ENCODE measurements at regions of chr10 and their contacts with region 1.

Region 1: GRCh38 chr10:110893559-110894179 is 21.9 kb downstream of the PDCD4 start:
- H3K4me3 ChIP-seq: no peak overlapping the region
- H3K27ac ChIP-seq: no peak overlapping the region
- H3K4me1 ChIP-seq: no peaks in the 10 kb centered on the region
- CTCF ChIP-seq: no peak

Region 2: DNA sequence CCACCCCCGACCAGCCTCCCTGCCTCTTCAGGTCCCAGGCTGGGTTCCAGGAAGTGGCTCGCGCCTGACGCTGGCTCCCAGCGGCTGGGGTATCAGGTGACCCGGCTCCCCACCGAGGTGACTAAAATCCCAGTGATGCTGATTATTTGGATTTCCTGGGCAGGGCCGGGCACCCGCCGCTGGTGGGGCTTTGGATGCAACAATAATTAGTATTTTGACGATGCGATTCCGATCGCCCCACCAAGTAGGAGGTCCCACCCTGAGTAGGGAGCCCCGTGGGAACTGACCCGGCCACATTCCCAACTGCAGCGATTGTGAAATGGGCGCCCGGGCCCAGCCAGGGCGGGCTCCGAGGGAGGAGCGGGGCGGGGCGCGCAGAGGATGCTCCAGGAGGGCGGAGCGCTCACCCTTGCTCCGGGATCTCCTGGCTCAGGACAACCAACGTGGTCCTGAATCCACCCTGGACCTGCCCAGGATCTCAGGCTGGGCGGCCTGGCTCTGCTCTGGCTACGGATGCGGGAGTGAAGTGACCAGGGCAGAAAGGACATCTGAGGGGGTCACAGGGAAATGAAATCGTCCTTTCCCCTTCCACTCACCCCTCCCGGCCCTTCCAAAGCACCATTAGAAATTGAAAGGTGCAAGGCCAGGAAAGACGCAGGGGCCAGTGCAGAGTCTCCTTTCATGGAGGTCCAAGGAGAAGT is 363.4 kb before region 1 on chr10:
- CTCF ChIA-PET with region 1: no interaction called
- POLR2A ChIA-PET with region 1: no interaction called
- H3K4me3 ChIP-seq: peak overlapping the region; percentile 39
- H3K27ac ChIP-seq: peak overlapping the region; percentile 59; the same call in 1 of the 2 replicates
- H3K4me1 ChIP-seq: peaks cover 11% of the 10 kb centered on the region
- CTCF ChIP-seq: no peak

Region 3: DNA sequence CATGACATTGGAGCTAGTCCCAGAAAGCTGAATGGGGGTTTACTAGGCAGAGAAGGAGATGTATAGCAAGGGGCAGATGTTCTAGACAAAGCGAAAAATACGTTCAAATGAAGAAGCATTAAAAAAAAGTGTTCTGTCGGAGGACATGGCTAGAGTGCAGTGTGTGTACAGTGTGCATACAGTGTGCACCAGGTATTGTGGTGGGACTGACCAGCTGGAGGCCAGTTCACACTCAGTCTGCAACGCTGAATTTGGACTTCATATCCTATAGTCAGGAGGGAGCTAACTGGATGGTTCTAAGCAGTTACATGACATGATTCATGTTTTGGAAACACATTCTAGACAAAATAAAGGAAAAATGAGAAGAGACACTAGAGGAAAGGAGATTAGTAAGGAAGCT is 16.5 kb after region 1 on chr10:
- CTCF ChIA-PET with region 1: interaction called, 10 read pairs
- POLR2A ChIA-PET with region 1: no interaction called
- H3K4me3 ChIP-seq: no peak overlapping the region
- H3K27ac ChIP-seq: no peak overlapping the region
- H3K4me1 ChIP-seq: no peaks in the 10 kb centered on the region; the same call in 1 of the 2 replicates
- CTCF ChIP-seq: no peak

Region 4: GRCh38 chr10:110967645-110968044 is 74.0 kb after region 1 on chr10:
- CTCF ChIA-PET with region 1: no interaction called
- POLR2A ChIA-PET with region 1: no interaction called
- H3K4me3 ChIP-seq: no peak overlapping the region
- H3K27ac ChIP-seq: no peak overlapping the region
- H3K4me1 ChIP-seq: peaks cover 7% of the 10 kb centered on the region; the same call in 1 of the 2 replicates
- CTCF ChIP-seq: no peak